ENCODE measurements at regions of chr11 and their contacts with region 1.

Region 1: DNA sequence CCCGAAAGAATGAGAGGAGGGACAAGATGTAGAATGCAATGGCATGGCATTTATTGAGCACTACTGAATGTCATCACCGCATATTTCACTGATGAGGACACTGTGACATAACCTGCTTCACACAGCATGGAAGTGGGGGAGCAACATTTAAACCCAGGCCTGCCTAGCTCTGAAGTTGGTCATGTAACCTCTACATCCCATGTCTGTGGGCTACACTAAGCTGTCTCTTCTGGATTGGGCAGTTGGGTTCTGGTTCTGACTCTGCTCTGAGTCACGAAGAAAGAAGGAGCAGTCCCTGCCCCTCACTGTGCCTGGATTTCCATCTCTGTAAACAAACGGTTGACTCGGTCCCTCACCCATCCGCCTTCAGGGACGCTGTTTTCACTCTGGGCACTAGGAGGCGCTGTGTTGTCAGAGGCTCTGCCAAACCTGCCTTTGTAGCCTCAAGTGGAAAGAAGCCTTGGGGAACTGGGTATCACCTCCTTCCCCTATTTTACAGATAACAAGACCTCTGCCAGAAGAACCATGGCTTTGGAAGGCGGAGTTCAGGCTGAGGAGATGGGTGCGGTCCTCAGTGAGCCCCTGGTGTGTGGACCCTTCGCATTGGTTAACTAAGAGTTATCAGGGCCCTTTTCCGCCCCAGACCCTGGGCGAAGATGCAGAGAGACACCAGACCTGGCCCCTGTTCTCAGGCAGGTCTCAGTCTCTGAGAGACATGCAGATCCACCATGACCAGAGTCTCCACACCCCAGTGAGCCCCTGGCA is 12.7 kb upstream of the ARHGEF17 start:
- DNase-seq: peak; percentile 88
- ATAC-seq: peak; percentile 91
- H3K4me3 Mint-ChIP-seq: no peak overlapping the region
- H3K27ac Mint-ChIP-seq: no peak overlapping the region
- H3K4me1 Mint-ChIP-seq: peaks cover 2% of the 10 kb centered on the region
- H3K27me3 Mint-ChIP-seq: peaks cover 7% of the 10 kb centered on the region
- CTCF ChIP-seq: peak; percentile 86

Region 2: DNA sequence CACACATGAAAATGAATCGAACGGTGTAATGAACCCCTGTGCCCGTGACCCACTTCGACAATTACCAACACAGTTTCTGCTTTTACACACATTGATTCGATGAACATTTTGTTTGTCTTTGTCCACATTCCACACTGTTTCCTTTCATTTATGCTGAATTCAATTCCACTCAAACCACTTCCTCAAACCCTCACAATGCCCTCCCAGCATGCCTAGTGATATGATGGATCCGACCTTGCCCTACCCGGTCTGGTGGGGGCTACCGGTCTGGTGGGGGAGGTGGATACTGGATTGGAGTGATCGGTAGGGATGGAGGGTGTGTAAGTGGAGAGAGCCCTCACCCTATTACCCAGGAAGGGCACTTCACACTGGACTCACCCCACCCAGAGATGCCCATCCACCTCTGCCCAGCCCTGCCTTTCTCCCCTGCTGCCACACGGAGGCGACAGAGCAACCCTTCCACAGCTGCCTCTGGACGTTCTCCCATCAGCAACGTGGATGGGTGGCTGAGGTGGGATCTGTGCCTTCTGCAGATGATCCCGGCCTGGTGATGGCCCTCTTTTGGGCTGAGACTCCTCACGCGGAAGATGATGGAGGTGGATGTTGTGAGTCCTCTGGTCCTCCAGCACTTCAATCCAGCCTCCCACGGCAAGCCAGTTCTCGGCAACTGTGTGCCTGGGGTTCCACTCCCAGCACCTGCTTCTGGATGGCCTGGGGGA is 110.3 kb before region 1 on chr11:
- CTCF ChIA-PET with region 1: interaction called, 39 read pairs
- POLR2A ChIA-PET with region 1: no interaction called
- intact Hi-C with region 1: loop called (anchors 10 kb)
- DNase-seq: peak; percentile 74
- ATAC-seq: peak; percentile 97
- H3K4me3 Mint-ChIP-seq: peak overlapping the region; percentile 11
- H3K27ac Mint-ChIP-seq: no peak overlapping the region
- H3K4me1 Mint-ChIP-seq: peaks cover 3% of the 10 kb centered on the region
- H3K27me3 Mint-ChIP-seq: peaks cover 7% of the 10 kb centered on the region
- CTCF ChIP-seq: peak; percentile 96

Region 3: DNA sequence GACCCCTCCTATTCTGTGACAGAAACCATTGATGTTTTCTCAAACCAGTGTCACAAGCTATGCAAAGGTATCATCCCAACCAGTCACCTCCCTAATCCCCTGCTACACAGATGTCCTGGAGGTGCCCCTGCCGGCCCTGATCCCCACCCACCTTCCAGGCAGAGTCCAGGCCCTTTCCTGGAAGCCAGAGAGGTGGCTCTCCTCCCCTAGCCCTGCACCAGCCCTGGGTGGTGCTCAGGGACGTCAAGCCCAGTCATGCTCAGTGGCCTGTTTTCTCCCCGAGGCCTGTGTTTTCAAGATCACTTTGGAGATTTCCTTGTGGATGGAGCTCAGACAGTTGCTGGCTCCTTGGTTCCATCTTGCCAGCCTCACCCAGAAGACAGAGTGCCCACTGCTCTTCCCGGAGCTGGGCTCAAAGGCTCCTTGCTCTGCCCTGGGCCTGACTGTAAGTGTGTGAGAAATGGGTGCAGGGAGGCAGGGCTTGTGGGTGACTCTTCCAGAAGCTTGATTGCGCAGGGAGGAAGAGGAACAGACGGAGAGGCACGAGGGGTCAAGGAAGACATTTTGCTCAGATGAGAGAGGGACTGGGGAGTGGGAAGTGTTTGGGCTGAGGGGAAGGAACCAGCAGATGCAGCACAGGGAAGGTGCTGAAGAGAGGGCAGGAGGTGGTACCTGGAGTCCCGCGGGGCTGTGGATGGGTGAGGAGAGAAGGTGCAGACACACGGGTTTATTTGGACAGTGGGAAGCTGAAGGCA is 12.0 kb before region 1 on chr11:
- CTCF ChIA-PET with region 1: interaction called, 44 read pairs
- POLR2A ChIA-PET with region 1: no interaction called
- intact Hi-C with region 1: no loop called
- DNase-seq: no peak
- ATAC-seq: no peak
- H3K4me3 Mint-ChIP-seq: no peak overlapping the region
- H3K27ac Mint-ChIP-seq: no peak overlapping the region
- H3K4me1 Mint-ChIP-seq: peaks cover 4% of the 10 kb centered on the region
- H3K27me3 Mint-ChIP-seq: no peaks in the 10 kb centered on the region
- CTCF ChIP-seq: no peak

Region 4: GRCh38 chr11:73307323-73308002 is 12.1 kb after region 1 on chr11:
- CTCF ChIA-PET with region 1: interaction called, 44 read pairs
- POLR2A ChIA-PET with region 1: interaction called, 3 read pairs
- intact Hi-C with region 1: no loop called
- DNase-seq: peak; percentile 97
- ATAC-seq: peak; percentile 81
- H3K4me3 Mint-ChIP-seq: peak overlapping the region; percentile 78
- H3K27ac Mint-ChIP-seq: no peak overlapping the region
- H3K4me1 Mint-ChIP-seq: peaks cover 6% of the 10 kb centered on the region
- H3K27me3 Mint-ChIP-seq: peaks cover 16% of the 10 kb centered on the region
- CTCF ChIP-seq: peak; percentile 62

Region 5: DNA sequence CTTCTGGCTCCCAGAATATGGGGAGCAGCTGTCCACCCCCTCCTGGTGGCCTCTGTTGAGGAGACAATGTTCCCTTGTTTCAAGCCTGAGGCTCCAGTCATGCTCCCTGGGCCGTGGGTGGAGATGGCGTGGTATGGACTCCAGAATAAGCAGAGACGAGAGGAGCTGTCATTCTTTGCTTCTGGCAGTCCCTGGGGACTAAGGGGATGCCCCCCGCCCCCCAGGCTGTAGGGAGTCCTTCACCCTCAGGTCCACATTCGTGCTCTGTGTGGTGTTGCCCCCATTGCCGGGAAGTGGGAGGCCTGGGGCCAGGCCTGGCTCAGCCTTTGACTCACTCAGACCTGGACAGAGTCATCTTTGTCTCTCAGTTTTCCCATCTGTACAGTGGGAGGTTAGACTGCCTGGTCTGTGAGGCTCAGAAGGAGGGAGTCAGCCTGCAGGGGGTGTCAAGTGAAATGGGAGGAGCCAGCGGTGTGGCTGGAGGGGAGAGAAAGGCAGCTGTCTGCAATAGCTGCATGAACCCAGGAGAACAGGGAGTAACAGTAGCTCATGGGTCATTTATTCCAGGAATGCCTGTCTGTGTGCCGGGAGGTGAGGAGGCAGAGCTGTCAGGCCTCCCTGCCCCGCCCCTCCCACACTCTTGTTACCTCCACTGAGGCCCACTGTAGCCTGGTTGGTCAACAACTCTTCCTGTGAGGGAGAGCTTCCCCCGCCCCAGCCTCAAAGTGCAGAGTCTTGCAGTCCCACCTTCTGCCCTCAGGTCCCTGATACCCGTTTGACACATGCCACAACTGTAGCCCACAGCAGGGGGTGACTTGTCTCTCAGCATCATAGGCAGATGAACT is 18.9 kb after region 1 on chr11:
- CTCF ChIA-PET with region 1: interaction called, 10 read pairs
- POLR2A ChIA-PET with region 1: no interaction called
- intact Hi-C with region 1: no loop called
- DNase-seq: no peak
- ATAC-seq: peak; percentile 23
- H3K4me3 Mint-ChIP-seq: no peak overlapping the region
- H3K27ac Mint-ChIP-seq: no peak overlapping the region
- H3K4me1 Mint-ChIP-seq: no peaks in the 10 kb centered on the region
- H3K27me3 Mint-ChIP-seq: peaks cover 7% of the 10 kb centered on the region
- CTCF ChIP-seq: no peak

Region 6: DNA sequence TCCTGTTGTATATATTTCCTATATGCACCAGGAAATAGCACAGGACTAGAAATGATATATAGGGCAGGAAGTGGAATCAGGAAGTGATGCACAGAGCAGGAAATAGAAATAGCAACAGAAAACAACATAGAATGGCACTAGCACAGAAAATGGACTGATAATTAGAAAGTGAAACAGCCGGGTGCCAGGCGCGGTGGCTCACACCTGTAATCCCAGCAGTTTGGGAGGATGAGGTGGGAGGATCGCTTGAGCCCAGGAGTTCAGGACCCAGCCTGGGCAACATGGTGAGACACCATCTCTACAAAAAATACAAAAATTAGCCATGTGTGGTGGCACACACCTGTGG is 70.8 kb after region 1 on chr11:
- CTCF ChIA-PET with region 1: no interaction called
- POLR2A ChIA-PET with region 1: no interaction called
- intact Hi-C with region 1: no loop called
- DNase-seq: peak; percentile 55
- ATAC-seq: peak; percentile 76
- H3K4me3 Mint-ChIP-seq: no peak overlapping the region
- H3K27ac Mint-ChIP-seq: peak overlapping the region; percentile 89
- H3K4me1 Mint-ChIP-seq: peaks cover 33% of the 10 kb centered on the region
- H3K27me3 Mint-ChIP-seq: no peaks in the 10 kb centered on the region
- CTCF ChIP-seq: no peak

Region 7: DNA sequence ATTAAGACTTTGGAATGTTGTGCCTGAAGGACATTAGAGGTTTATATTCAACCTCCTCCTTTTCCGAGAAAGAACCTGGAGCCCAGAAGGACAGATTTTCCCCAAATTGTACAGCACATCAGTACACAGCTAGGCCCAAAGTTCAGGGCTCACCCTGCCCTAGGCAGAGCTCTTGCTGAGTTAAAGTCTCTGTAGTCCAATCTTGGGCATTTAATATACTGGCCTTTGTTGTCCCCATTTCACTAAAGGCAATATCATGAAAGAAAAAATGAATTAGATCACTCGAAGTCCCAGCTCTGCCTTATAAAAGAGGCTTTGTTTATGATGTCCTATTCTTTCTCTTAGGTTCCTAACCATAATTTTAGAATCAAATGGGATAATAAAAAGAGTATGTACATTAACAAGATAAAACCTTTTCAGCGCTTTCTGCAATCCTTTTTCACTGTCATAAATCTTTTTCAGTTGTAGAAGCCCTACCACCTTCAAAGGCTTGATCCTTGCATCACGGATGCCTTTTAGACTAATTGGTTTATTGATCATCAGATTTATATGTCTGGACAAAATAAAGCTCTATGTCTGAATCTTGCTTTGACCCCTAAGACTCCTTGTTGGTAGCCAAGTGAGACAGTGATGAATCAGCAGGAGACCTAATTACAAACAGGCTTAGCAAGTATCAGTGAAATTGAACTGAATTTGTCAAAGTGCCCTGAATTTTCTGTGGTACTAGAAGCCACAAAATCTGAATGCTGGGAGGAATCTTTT is 120.6 kb after region 1 on chr11:
- CTCF ChIA-PET with region 1: no interaction called
- POLR2A ChIA-PET with region 1: no interaction called
- intact Hi-C with region 1: no loop called
- DNase-seq: no peak
- ATAC-seq: no peak
- H3K4me3 Mint-ChIP-seq: no peak overlapping the region
- H3K27ac Mint-ChIP-seq: no peak overlapping the region
- H3K4me1 Mint-ChIP-seq: peaks cover 3% of the 10 kb centered on the region
- H3K27me3 Mint-ChIP-seq: no peaks in the 10 kb centered on the region
- CTCF ChIP-seq: no peak